ENCODE measurements at regions of chr9 and their contacts with region 1.

Region 1: GRCh38 chr9:20972684-20973083 is 58.8 kb downstream of the HACD4 start:
- DNase-seq: no peak
- ATAC-seq: no peak

Region 2: DNA sequence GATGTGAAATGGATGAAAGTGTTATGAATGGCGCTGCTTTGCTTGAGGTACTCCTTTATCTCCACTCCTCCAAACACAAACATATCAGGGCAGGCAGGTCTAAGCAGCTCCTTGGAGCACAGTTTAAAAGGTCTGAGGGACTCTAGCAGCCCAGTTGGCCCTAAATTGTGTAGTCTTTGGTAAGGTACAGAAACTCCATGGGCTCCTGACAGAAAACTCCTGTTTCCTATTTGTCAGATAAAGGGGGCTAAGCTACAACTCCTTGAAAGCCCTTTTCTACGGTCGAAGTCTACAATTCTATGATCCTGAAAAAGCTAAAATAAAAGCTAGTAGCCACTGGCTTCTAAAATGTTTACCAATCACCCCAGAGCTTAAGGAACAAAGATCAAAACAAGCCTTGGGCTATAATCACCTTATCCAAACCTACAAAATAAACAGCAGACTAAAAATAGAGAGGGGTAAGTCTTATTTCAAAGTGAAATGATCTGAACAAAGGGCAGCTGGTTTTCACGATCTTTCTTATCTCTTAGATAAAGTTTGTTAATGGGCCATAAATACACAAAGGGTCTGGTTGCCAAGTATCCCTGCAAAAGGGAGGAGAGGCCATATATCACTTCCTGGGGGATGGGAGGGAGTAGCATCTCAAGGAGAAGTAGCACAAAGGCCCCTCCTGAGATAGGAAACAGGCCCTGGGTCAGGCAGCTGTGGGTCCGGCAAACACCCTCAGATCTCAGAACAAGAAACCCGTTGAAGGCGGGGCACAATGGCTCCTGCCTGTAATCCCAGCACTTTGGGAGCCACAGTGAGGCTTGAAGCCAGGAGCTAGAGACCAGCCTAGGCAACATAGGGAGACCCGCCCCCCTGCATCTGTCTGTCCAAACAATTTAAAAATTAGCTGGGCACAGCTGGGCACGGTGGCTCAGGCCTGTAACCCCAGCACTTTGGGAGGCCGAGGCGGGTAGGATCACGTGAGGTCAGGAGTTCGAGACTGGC is 1770.5 kb before region 1 on chr9:
- intact Hi-C with region 1: no loop called
- DNase-seq: no peak
- ATAC-seq: no peak

Region 3: DNA sequence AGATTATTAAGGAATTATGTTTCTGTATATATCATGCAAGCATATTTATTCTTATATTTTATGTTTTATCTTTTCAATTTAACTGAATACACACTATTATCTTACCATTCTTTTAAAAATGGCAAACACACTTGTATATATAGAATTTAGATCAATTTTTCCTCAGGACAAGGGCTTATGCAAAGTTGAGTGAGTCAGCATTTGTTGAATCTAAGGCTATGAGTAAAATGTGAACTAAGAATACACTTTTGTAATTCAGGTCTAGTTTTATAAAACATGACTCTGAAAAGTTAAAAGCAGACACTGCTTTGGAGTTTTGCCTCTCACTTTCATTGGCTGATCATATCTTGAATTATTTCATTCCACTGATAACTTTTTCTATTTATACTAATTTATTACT is 160.8 kb before region 1 on chr9:
- intact Hi-C with region 1: no loop called
- DNase-seq: no peak
- ATAC-seq: no peak

Region 4: DNA sequence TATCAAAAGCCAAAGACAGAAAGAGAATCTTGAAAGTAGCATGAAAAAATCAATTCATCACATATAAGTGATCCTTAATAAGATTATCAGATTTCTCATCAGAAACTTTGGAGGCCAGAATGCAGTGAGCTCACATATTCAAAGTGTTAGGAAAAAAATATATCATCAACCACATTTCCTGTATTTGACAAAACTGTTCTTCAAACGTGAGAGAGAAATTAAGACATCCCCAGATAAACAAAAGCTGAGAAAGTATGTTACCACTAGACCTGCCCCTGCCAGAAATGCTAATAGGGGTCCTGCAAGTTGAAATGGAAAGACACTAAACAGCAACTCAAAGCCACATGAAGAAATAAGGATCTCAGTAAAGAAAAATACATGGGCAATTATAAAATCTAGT is 28.9 kb after region 1 on chr9:
- intact Hi-C with region 1: no loop called
- DNase-seq: no peak
- ATAC-seq: no peak

Region 5: GRCh38 chr9:21119093-21119770 is 146.5 kb after region 1 on chr9:
- intact Hi-C with region 1: loop called (anchors 5 kb)
- DNase-seq: no peak
- ATAC-seq: peak; percentile 44

Measured in sciatic nerve (tissue), 2 donors.